SK-N-SH (cell line): ENCODE measurements at regions of chr7 and their contacts with region 1.

Region 1: GRCh38 chr7:94295850-94296249 is 98.8 kb upstream of the COL1A2 start:
- DNase-seq: peak; percentile 39
- H3K4me3 ChIP-seq: no peak overlapping the region
- H3K27ac ChIP-seq: peak overlapping the region; percentile 58 to 99; a peak in 3 of 4 replicates
- H3K4me1 ChIP-seq: peaks cover 9 to 47% of the 10 kb centered on the region in 2 experiments
- H3K27me3 ChIP-seq: no peaks in the 10 kb centered on the region
- CTCF ChIP-seq: peak; percentile 90
- EP300 ChIP-seq: no peak; a peak in 1 of 4 replicates
- RAD21 ChIP-seq: peak; percentile 92

Region 2: GRCh38 chr7:94231305-94231704 is 64.5 kb before region 1 on chr7:
- CTCF ChIA-PET with region 1: no interaction called
- POLR2A ChIA-PET with region 1: no interaction called
- DNase-seq: no peak
- H3K4me3 ChIP-seq: no peak overlapping the region
- H3K27ac ChIP-seq: no peak overlapping the region
- H3K4me1 ChIP-seq: peaks cover 0 to 10% of the 10 kb centered on the region in 2 experiments; a peak in 2 of 4 replicates
- H3K27me3 ChIP-seq: no peaks in the 10 kb centered on the region
- CTCF ChIP-seq: no peak
- EP300 ChIP-seq: no peak
- RAD21 ChIP-seq: no peak

Region 3: GRCh38 chr7:94250985-94251384 is 44.9 kb before region 1 on chr7:
- CTCF ChIA-PET with region 1: no interaction called
- POLR2A ChIA-PET with region 1: no interaction called
- DNase-seq: no peak
- H3K4me3 ChIP-seq: no peak overlapping the region
- H3K27ac ChIP-seq: no peak overlapping the region
- H3K4me1 ChIP-seq: peaks cover 0 to 22% of the 10 kb centered on the region in 2 experiments; a peak in 2 of 4 replicates
- H3K27me3 ChIP-seq: no peaks in the 10 kb centered on the region
- CTCF ChIP-seq: no peak
- EP300 ChIP-seq: no peak
- RAD21 ChIP-seq: no peak

Region 4: DNA sequence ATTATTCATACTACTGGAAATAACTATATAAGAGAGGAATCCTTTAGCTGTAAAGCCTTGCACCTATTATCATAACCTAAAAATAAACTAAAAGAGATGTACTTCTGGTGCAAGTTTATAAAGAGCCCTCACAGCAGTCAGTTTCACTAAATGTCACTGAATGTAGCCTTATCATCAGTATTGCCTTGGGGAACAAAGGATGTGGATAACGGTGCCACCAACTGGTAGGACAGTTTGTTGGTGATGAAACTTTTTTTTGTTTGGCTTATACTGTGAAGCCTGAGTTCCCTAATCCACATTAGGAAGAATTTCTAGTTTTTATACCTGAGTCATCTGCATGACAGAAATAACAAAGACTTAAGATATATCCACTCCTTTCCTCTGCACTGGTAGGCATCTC is 19.1 kb before region 1 on chr7:
- CTCF ChIA-PET with region 1: interaction called, 53 read pairs
- POLR2A ChIA-PET with region 1: no interaction called
- DNase-seq: peak; percentile 37
- H3K4me3 ChIP-seq: no peak overlapping the region
- H3K27ac ChIP-seq: peak overlapping the region in 1 of 2 experiments; percentile 94; a peak in 3 of 4 replicates
- H3K4me1 ChIP-seq: peaks cover 0 to 16% of the 10 kb centered on the region in 2 experiments; a peak in 2 of 4 replicates
- H3K27me3 ChIP-seq: no peaks in the 10 kb centered on the region
- CTCF ChIP-seq: peak; percentile 58
- EP300 ChIP-seq: peak in 1 of 2 experiments; percentile 54; a peak in 2 of 4 replicates
- RAD21 ChIP-seq: peak; percentile 92

Region 5: DNA sequence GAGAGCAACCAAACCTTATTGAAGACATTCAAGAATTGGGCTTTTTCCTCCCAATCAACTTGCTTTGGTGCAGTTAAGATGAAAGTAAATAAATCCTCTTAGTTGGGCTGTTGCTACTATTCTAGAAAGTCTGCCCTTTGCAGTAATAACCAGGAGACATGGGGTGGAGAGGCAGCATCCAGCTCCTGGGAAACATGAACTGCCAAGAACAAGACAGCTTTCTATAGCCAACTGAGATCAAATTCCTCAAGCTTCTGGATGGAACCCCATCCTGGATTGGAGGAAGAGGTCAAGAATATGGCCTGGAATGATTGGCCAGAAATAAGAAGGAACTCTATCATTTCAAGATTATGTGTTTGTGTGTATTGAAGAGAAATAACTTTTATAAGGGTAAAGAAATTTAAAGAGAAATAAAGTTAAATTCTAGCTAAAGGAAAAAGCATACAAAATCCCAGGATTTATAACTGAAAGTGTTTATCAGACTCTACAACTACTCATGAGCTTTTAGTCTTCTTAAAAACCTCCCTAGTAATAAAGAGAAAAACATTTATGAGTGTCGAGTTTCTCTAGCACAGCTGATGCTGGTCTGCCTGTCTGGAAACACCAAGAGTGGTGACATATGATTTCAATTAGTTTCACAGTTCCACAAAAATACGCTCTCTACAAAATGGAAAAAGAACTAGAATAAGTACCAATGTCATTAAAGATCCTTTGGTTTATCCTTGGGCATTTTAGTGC is 28.7 kb after region 1 on chr7:
- CTCF ChIA-PET with region 1: interaction called, 13 read pairs
- POLR2A ChIA-PET with region 1: no interaction called
- DNase-seq: peak; percentile 26
- H3K4me3 ChIP-seq: no peak overlapping the region
- H3K27ac ChIP-seq: peak overlapping the region; percentile 59 to 86
- H3K4me1 ChIP-seq: peaks cover 11 to 23% of the 10 kb centered on the region in 2 experiments
- H3K27me3 ChIP-seq: no peaks in the 10 kb centered on the region
- CTCF ChIP-seq: no peak
- EP300 ChIP-seq: no peak
- RAD21 ChIP-seq: no peak